Activated CD4-positive, alpha-beta T cell treated with anti-CD3 and anti-CD28 coated beads, Interleukin-2, amount 10 ng/mL, durations not matched to agents 24 days and 14 days (primary cell): ENCODE measurements at regions of chr11 and their contacts with region 1.

Region 1: DNA sequence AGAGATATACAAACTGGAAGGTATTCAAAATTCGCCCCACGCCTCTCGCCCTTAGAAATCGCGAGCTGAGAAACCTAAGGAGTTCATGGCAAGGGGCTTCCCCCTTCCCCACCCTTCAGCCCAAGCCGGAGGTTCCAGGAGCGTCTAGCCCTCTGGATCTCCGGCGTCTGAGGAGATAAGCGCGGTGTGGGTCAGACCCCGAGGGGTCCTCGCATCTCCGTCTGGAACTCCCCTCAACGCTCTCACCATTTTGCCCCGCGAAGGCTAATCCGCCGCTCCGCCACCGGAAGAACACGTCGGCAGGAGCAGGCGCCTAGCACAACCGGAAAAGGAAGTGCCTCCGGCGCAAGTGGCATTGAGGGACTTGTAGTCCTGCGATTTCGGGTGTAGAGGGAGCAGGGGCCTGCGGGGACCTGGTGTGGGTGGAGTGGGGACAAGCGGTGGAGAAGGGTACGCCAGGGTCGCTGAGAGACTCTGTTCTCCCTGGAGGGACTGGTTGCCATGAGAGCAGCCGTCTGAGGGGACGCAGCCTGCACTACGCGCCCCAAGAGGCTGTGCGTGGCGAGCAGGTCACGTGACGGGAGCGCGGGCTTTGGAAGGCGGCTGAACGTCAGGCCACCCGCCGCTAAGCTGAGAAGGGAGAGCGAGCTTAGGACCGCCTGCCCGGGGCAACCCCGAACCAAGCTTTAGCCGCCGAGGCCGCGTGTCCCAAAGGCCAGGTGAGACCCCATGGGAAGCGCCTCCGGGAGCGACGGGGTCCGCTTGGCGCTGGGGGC is at the starts of genes FEN1 and TMEM258:
- DNase-seq: peak; percentile 96
- H3K4me3 Mint-ChIP-seq: peak within 1 kb of the TSS; percentile 95
- H3K27ac Mint-ChIP-seq: peak within 1 kb of the TSS; percentile 99
- H3K4me1 Mint-ChIP-seq: peaks cover 43% of the 10 kb centered on the region
- H3K27me3 Mint-ChIP-seq: no peaks in the 10 kb centered on the region
- total RNA-seq, gene FEN1: 144 and 152 TPM in 2 replicates
- total RNA-seq, gene TMEM258: 179 and 187 TPM in 2 replicates

Region 2: GRCh38 chr11:61361686-61362541 is 430.6 kb before region 1 on chr11 and contains the starts of genes CYB561A3 and TMEM138:
- intact Hi-C with region 1: loop called (anchors 10 kb)
- DNase-seq: peak; percentile 97
- H3K4me3 Mint-ChIP-seq: peak within 1 kb of the TSS; percentile 96
- H3K27ac Mint-ChIP-seq: peak within 1 kb of the TSS; percentile 95
- H3K4me1 Mint-ChIP-seq: peaks cover 26% of the 10 kb centered on the region
- H3K27me3 Mint-ChIP-seq: no peaks in the 10 kb centered on the region
- total RNA-seq, gene CYB561A3: 34.9 and 35.1 TPM in 2 replicates
- total RNA-seq, gene TMEM138: 65.2 and 69.9 TPM in 2 replicates

Region 3: GRCh38 chr11:61616434-61616833 is 176.1 kb before region 1 on chr11:
- intact Hi-C with region 1: no loop called
- DNase-seq: no peak
- H3K4me3 Mint-ChIP-seq: no peak overlapping the region
- H3K27ac Mint-ChIP-seq: no peak overlapping the region
- H3K4me1 Mint-ChIP-seq: no peaks in the 10 kb centered on the region
- H3K27me3 Mint-ChIP-seq: peaks cover 5% of the 10 kb centered on the region

Region 4: DNA sequence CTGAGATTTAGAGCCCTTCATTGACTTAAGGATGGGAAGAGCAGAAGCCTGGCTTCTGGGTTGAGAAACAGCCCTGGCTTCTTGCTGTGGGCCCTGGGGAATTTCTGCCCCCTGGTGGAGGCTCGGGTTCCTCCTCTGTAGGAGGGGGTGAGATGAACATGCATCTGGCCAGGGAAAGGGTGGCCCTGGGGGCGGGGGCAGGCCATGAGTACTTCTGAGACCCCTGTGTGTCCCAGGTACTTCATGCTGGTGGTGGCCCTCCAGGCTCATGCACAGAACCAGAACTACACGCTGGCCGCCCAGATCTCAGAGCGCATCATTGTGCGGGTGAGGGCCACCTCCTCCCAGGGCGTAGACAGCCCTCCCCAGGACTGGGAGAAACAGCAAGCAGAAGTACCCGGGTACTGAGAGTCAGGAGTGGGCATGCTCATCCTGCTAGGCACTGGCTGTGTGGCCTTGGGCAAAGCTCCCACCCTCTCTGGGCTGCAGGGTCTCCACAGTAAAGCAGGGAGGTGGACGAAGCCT is 15.9 kb before region 1 on chr11:
- intact Hi-C with region 1: loop called (anchors 1 kb)
- DNase-seq: peak; percentile 90
- H3K4me3 Mint-ChIP-seq: peak overlapping the region; percentile 71
- H3K27ac Mint-ChIP-seq: no peak overlapping the region
- H3K4me1 Mint-ChIP-seq: peaks cover 13% of the 10 kb centered on the region
- H3K27me3 Mint-ChIP-seq: no peaks in the 10 kb centered on the region

Region 5: DNA sequence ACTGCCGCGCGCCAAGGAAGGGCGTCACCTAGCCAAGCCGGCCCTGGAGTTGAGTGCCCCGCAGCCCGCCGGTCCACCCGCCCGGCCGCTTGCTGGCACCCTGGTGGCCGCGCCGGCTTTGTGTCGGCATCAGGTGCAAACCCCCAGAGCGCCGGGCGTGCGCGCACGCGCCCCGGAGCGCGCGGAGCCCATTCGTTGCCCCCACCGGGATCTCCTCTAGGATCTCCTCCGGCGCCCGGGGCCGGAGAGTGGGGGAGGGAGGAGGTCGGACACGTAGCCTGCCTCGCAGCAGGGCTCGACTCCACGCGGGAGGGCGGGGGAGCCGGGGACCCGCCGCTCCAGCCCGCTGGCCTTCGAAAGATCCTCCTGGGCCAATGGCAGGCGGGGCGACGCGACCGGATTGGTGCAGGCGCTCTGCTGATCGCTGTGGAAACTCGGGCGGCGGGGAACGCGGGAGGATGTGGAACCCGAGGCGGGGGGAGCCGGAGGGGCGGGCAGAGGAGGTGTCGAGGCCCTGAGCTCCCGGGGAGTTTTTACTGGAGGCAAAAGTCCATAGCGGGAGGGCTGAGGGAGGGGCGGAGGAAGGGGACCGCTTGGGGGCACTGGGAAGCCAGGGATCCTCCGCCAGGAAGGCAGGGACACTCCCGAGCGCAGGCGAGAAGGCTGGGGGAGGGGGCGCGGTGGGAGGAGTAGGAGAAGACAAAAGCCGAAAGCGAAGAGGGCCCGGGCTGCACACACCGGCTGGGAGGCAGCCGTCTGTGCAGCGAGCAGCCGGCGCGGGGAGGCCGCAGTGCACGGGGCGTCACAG is 35.3 kb after region 1 on chr11 and contains the start of gene FADS2:
- intact Hi-C with region 1: loop called (anchors 1 kb)
- DNase-seq: peak; percentile 98
- H3K4me3 Mint-ChIP-seq: peak within 1 kb of the TSS; percentile 92
- H3K27ac Mint-ChIP-seq: peak within 1 kb of the TSS; percentile 95
- H3K4me1 Mint-ChIP-seq: peaks cover 44% of the 10 kb centered on the region
- H3K27me3 Mint-ChIP-seq: no peaks in the 10 kb centered on the region
- total RNA-seq, gene FADS2: 278 and 283 TPM in 2 replicates

Region 6: DNA sequence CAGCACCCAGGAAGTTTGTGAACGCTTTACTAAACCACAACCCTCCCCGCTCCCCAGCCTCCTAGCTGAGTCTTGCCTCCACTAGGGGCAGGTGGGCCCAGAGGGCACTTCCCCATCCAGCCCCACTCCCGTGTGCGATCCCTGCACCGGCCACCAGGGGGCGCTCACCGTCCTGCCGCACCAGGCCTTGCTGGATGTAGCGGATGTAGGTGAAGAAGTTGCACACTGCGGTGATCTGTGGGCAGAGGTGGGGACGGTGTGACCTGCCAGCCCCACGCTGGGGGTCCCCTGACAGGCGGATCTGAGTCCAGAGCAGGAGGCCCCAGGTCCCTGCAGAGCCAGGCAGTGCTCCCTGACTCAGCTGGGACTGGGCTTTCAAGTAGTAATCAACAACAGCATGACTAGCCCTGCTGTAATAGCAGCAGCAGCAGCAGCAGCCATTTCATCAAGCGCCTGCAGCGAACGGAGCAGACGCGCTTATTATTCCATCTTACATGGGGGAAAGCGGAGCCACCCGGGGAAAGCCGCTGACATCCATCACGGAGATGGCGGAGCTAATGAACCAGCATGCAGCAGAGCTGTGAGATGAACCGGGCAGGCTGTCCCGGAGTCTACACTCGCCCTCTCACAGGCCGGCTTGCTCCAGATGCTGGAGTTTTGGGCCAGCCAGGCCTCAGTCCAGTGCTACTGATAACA is 106.8 kb after region 1 on chr11:
- intact Hi-C with region 1: loop called (anchors 2 kb)
- DNase-seq: peak; percentile 98
- H3K4me3 Mint-ChIP-seq: no peak overlapping the region
- H3K27ac Mint-ChIP-seq: peak overlapping the region; percentile 30
- H3K4me1 Mint-ChIP-seq: peaks cover 4% of the 10 kb centered on the region
- H3K27me3 Mint-ChIP-seq: peaks cover 3% of the 10 kb centered on the region

Region 7: DNA sequence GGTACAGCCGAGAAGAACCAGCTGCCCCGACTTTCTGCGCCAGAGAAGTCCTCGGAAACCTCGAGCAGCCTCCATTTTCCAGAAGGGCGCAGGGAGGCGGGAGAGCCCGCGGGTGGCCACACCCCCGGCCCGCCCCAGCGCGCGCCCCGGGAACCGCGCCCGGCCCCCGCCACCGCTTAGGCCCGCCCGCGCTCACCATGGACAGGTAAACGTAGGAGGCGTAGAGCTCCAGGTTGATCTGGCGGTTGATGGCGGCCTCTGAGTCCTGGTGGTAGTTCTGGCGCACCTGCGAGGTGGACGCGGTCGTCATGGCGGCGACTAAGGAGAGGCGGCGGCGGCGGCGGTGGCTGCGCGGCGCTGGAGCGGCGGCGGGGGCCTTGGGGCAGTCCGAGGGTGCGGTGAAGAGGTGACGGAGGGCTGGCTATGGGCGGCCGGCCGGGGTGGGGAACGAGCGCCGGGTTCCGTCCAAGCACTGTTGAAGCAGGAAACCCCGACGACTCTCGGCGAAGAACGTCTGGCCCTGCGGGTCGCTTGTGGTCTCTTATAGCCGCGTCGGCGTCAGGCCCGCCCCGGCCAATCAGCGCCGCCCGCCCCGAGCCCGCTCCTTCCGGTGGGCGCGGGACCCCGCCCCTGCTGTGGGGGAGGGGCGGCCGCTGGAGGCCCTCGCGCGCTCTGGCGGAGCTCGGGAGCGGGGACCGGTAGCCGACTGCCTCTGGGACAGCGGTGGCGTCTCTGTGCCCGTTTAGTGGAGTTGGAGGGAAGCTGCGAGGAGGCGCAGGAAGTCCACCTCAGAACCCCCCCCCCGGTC is 174.8 kb after region 1 on chr11 and contains the start of gene FTH1:
- intact Hi-C with region 1: loop called (anchors 1 kb)
- DNase-seq: peak; percentile 97
- H3K4me3 Mint-ChIP-seq: peak within 1 kb of the TSS; percentile 92
- H3K27ac Mint-ChIP-seq: peak within 1 kb of the TSS; percentile 95
- H3K4me1 Mint-ChIP-seq: peaks cover 60% of the 10 kb centered on the region
- H3K27me3 Mint-ChIP-seq: no peaks in the 10 kb centered on the region
- total RNA-seq, gene FTH1: 500 and 515 TPM in 2 replicates

Region 8: DNA sequence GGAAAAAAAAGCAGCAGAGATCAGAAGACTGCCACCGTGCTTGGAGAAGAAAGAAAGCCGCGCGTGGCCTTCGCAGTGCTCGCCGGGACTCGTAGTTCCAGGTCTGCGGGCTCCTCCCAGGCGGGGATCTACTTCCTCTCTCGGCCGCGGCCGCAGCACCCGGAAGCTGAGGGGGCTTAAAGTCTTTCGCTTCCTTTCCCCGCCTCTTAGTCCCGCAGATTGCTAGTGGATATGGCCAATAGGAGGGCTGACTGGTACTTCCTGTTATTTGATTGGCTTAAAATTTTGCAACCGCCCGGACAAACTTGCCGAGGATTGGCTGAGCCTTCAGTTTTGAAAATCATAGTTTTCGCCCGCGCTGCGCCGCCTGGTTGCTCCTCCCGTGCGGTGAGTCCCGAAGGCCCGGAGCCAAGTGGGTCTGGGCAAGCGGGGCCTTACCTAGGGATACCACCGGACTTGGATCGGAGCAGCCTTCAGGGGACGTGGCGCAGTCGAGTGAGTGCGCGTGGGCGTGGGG is 331.2 kb after region 1 on chr11 and contains the start of gene INCENP:
- intact Hi-C with region 1: loop called (anchors 1 kb)
- DNase-seq: peak; percentile 98
- H3K4me3 Mint-ChIP-seq: peak within 1 kb of the TSS; percentile 88
- H3K27ac Mint-ChIP-seq: peak within 1 kb of the TSS; percentile 81
- H3K4me1 Mint-ChIP-seq: peaks cover 30% of the 10 kb centered on the region
- H3K27me3 Mint-ChIP-seq: peaks cover 3% of the 10 kb centered on the region
- total RNA-seq, gene INCENP: 95.0 and 102 TPM in 2 replicates